MCF 10A (cell line): ENCODE measurements at regions of chr11 and their contacts with region 1.

Region 1: GRCh38 chr11:46389450-46390253 is 1.9 kb downstream of the CHRM4 start:
- DNase-seq: peak; percentile 70
- H3K4me3 Mint-ChIP-seq: peak overlapping the region; percentile 69
- H3K27ac Mint-ChIP-seq: no peak overlapping the region
- H3K4me1 Mint-ChIP-seq: peaks cover 11% of the 10 kb centered on the region
- H3K27me3 Mint-ChIP-seq: peaks cover 40% of the 10 kb centered on the region
- CTCF ChIP-seq: peak; percentile 88

Region 2: GRCh38 chr11:46112961-46113617 is 276.6 kb before region 1 on chr11:
- CTCF ChIA-PET with region 1: no interaction called
- POLR2A ChIA-PET with region 1: no interaction called
- intact Hi-C with region 1: no loop called
- DNase-seq: peak; percentile 48
- H3K4me3 Mint-ChIP-seq: no peak overlapping the region
- H3K27ac Mint-ChIP-seq: no peak overlapping the region
- H3K4me1 Mint-ChIP-seq: peaks cover 16% of the 10 kb centered on the region
- H3K27me3 Mint-ChIP-seq: no peaks in the 10 kb centered on the region
- CTCF ChIP-seq: no peak

Region 3: DNA sequence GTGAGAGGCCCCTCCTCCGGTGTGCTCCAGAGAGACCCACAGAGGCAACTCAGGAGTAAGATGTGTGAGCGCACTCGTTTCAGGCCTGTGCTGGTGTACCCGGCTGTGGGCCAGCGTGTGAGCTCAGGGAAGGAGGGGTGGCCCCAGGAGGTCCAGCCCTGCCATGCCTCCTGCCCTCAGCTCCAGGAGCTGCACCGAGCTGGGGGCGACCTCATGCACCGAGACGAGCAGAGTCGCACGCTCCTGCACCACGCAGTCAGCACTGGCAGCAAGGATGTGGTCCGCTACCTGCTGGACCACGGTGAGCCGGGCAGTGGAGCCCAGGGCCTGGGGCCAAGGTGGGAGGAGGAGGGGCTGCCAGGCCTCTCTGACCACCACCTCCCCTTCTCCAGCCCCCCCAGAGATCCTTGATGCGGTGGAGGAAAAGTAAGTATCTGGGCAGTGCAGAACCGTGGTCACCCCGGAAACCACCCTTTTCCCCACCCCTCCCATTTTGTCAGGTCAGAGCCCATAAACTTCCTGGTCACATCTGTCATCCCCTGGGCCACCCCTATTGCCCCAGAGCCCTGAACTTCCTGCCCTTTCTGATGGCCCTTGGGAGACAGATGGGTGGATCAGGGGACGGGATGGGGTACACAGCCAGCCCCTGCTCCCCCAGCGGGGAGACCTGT is 10.7 kb before region 1 on chr11:
- CTCF ChIA-PET with region 1: interaction called, 21 read pairs
- POLR2A ChIA-PET with region 1: interaction called, 3 read pairs
- intact Hi-C with region 1: no loop called
- DNase-seq: no peak
- H3K4me3 Mint-ChIP-seq: no peak overlapping the region
- H3K27ac Mint-ChIP-seq: no peak overlapping the region
- H3K4me1 Mint-ChIP-seq: no peaks in the 10 kb centered on the region
- H3K27me3 Mint-ChIP-seq: no peaks in the 10 kb centered on the region
- CTCF ChIP-seq: no peak

Region 4: GRCh38 chr11:46537537-46538295 is 148.1 kb after region 1 on chr11:
- CTCF ChIA-PET with region 1: interaction called, 24 read pairs
- POLR2A ChIA-PET with region 1: interaction called, 4 read pairs
- intact Hi-C with region 1: loop called (anchors 1 kb)
- DNase-seq: peak; percentile 92
- H3K4me3 Mint-ChIP-seq: no peak overlapping the region
- H3K27ac Mint-ChIP-seq: no peak overlapping the region
- H3K4me1 Mint-ChIP-seq: peaks cover 12% of the 10 kb centered on the region
- H3K27me3 Mint-ChIP-seq: no peaks in the 10 kb centered on the region
- CTCF ChIP-seq: peak; percentile 84